ENCODE measurements at regions of chr4 and their contacts with region 1.

Region 1: GRCh38 chr4:169582205-169582604 is 30.2 kb downstream of the NEK1 start:
- DNase-seq: no peak
- H3K4me3 ChIP-seq: no peak overlapping the region
- H3K27me3 ChIP-seq: no peaks in the 10 kb centered on the region
- CTCF ChIP-seq: no peak

Region 2: DNA sequence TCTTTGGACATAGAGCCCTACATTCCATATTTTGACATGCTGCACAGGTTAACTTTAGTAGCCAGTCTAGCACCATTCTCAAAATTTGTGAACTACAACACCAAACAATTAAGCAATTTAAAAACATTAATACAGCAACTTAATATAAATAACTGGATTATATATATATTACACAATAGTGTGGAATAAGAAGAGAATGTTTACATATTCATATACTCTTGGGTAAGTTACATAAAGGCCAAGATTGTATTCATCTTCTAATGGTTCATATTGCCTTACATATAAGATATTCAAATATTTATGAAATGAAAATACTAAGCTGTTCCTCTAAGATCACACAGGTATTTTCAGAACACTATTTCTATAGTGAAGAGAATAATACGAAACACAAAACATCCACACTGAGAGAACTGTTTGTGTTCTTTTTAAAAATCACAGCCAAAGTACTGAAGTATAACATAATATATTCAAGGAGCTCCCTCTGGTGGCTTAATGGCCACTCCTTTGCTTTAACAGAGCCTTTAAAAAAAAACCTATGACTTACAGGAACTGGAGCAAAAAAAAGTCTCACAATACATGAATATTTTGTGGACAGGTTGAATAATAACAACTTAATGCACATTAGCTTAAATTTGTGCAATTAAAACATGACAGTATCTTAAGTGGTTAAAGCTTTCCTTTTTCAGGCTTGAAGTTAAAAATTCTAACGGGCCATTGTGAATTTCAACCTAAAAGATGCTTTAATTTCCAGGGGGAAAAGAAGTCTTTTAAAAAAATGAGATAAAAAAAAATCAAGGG is 16.0 kb before region 1 on chr4:
- CTCF ChIA-PET with region 1: interaction called, 16 read pairs
- POLR2A ChIA-PET with region 1: no interaction called
- DNase-seq: no peak
- H3K4me3 ChIP-seq: no peak overlapping the region
- H3K27me3 ChIP-seq: no peaks in the 10 kb centered on the region
- CTCF ChIP-seq: peak; percentile 70